ENCODE measurements at regions of chr1 and their contacts with region 1.

Region 1: DNA sequence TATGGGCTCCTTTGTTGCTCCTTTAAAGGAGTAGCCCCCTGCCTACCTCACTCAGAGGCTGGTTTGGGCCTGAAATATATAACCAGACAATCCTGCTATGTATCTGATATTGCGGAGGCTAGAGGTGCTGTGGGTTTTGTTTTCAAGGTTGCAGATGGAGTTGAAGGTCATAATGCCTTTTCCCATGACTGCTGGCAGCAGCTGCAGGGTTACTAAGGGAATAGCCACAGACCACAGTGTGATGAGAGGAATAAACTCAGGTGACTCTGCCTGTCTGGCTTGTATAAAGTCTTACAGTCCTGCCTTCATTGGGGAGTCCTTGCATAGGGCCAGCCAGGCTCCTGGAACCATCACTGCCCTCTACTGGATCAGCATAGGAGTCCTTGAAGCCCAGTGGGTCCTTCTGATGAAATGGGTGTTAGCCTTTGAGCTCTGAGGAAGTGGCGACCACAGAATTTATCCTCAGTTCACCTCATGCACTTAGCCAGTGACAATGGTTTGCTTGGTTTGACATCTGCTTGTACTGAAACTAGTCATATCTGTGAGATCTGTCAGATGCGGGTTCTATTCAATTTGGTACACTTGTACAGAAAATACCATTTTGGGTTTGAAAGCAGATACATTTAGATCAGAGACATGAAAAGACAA is 174.4 kb upstream of the HMCN1 start:
- DNase-seq: peak; percentile 76
- H3K4me3 Mint-ChIP-seq: no peak overlapping the region
- H3K27ac Mint-ChIP-seq: peak overlapping the region; percentile 59
- H3K4me1 Mint-ChIP-seq: peaks cover 40% of the 10 kb centered on the region
- H3K27me3 Mint-ChIP-seq: no peaks in the 10 kb centered on the region

Region 2: DNA sequence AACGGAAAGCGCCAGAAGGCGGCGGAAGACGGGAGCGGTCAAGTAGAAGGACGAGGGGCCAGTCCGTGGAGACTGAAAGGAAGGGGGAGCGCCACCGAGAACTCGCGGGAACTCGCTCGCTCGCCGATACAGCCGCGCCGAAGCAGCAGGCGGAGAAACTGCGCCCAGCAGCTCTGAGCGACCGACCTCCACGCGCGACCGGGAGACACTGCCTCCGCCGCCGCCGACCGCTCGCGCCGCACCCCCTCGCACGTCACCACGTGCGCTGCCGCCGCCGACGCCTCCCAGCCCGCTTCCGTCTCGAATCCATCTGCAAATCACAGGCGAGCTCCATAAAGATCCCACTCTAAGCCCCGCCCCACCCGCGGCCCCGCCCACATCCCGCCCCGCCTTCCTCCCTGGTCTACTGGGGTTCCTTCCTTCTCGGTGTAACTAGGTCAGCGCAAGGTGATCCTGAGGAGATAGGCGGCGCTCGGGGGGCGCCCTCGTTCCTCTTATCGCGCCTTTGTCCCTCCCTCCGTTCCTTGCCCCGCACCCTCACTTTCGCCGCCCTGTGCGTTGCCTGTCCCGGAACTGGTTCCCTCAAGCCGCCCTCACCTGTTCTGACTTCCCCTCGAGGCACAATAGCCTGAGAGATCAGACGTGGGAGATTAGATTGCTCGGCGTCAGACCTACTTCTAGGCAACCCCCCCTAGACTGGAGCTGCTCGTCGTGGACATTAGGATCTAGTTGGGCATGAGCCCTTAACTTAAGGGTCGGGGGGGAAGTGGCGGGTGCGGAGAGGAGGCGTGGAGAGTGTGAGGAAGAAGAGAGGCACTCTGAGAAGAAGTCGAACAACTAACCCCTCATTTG is 242.5 kb before region 1 on chr1 and contains the start of gene IVNS1ABP:
- CTCF ChIA-PET with region 1: interaction called, 28 read pairs
- DNase-seq: peak; percentile 96
- H3K4me3 Mint-ChIP-seq: peak within 1 kb of the TSS; percentile 95
- H3K27ac Mint-ChIP-seq: peak within 1 kb of the TSS; percentile 98
- H3K4me1 Mint-ChIP-seq: peaks cover 55% of the 10 kb centered on the region
- H3K27me3 Mint-ChIP-seq: no peaks in the 10 kb centered on the region

Region 3: GRCh38 chr1:185360714-185361113 is 199.1 kb before region 1 on chr1:
- CTCF ChIA-PET with region 1: no interaction called
- DNase-seq: no peak
- H3K4me3 Mint-ChIP-seq: no peak overlapping the region
- H3K27ac Mint-ChIP-seq: no peak overlapping the region
- H3K4me1 Mint-ChIP-seq: no peaks in the 10 kb centered on the region
- H3K27me3 Mint-ChIP-seq: no peaks in the 10 kb centered on the region

Region 4: DNA sequence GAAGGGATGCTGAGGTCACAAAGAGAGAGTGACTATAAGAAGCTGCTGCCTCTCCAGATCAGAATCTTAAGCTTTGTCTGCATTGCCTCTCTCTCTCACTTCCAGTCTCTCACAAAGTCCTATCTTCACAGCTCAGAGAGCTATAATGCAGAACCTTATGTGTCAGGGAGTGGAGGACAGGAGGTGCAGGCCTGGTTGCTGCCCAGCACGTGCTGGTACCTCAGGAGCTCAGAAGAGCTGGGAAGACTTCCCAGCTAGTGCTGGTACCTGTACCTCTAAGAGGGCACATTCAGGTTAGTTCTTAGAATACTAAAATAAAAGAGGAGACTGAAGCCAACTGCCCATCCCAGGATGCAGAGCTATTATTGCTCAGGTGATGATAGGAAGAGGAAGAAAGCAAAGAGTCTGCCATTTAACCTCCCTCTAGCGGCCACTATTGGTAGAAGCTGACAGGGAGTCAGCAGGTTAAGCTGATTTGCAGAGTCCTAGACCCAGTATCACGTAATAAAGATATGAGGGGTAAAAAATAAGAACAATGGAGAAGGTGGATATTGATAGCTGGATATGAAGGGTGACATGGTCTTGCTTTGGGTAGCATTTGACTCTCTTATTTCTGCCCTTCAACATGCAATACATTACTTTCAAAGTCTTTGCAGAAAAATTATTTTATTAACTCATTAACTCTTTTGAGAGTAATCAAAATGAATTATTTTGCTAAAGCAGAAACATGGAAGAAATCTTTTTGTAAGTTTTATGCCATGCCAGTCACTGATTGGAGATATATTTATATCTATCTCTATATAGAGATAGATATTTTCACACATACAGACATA is 36.2 kb after region 1 on chr1:
- CTCF ChIA-PET with region 1: interaction called, 21 read pairs
- DNase-seq: peak; percentile 58
- H3K4me3 Mint-ChIP-seq: no peak overlapping the region
- H3K27ac Mint-ChIP-seq: peak overlapping the region; percentile 55
- H3K4me1 Mint-ChIP-seq: peaks cover 8% of the 10 kb centered on the region
- H3K27me3 Mint-ChIP-seq: no peaks in the 10 kb centered on the region

Region 5: GRCh38 chr1:185670187-185670627 is 110.4 kb after region 1 on chr1:
- CTCF ChIA-PET with region 1: interaction called, 10 read pairs
- DNase-seq: peak; percentile 64
- H3K4me3 Mint-ChIP-seq: no peak overlapping the region
- H3K27ac Mint-ChIP-seq: no peak overlapping the region
- H3K4me1 Mint-ChIP-seq: peaks cover 28% of the 10 kb centered on the region
- H3K27me3 Mint-ChIP-seq: no peaks in the 10 kb centered on the region

Measured in activated naive CD4-positive, alpha-beta T cell treated with anti-CD3 and anti-CD28 coated beads, Interleukin-2, amount 10 ng/mL, durations not matched to agents 7 days and 5 days (primary cell).